Naive thymus-derived CD4-positive, alpha-beta T cell (primary cell): ENCODE measurements at regions of chr6 and their contacts with region 1.

Region 1: DNA sequence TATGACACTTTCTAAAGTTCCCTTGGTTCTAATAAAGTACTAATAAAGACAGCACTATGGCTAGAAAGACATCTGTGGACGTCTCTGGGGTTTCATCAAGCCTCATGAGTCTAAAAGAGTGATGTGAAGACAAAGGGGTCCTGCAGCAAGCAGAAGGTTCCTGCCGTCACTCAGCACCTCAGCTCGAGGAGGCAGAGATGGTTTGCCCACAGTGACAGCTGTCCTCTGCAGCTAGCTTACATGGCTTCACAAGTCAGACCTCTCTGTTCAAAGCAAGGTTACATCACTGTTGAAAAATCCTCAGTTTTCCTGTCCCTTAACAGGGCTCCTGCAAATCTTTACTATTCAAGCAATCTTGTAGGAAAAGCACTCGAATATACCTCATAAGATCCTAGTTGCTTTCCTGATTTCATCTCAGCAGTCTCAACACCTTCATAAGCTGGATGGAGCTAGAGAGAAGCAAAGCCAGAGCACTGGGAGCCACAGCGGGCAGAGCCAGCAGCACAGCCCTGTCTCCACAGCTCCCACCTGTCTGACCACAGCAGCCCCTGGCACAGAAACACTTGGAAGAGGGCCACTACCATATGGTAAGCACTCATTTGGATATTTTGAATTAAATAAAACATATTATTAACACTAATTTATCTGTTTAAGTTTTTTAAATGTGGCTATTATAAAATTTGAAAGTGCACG is 202.3 kb downstream of the GMDS start:
- DNase-seq: no peak
- ATAC-seq: no peak
- H3K4me3 ChIP-seq: no peak overlapping the region
- H3K4me3 Mint-ChIP-seq: no peak overlapping the region
- H3K27ac ChIP-seq: no peak overlapping the region
- H3K27ac Mint-ChIP-seq: peak overlapping the region in 1 of 9 donors; percentile 6
- H3K4me1 ChIP-seq: peaks cover 9 to 10% of the 10 kb centered on the region in 2 donors
- H3K4me1 Mint-ChIP-seq: peaks cover 13 to 28% (median 18%) of the 10 kb centered on the region in 7 donors
- H3K27me3 ChIP-seq: no peaks in the 10 kb centered on the region
- H3K27me3 Mint-ChIP-seq: no peaks in the 10 kb centered on the region

Region 2: GRCh38 chr6:1940381-1940780 is 102.7 kb before region 1 on chr6:
- CTCF ChIA-PET with region 1: no interaction called
- POLR2A ChIA-PET with region 1: no interaction called
- intact Hi-C with region 1: no loop called
- DNase-seq: no peak
- ATAC-seq: no peak
- H3K4me3 ChIP-seq: no peak overlapping the region
- H3K4me3 Mint-ChIP-seq: no peak overlapping the region
- H3K27ac ChIP-seq: no peak overlapping the region
- H3K27ac Mint-ChIP-seq: no peak overlapping the region
- H3K4me1 ChIP-seq: no peaks in the 10 kb centered on the region
- H3K4me1 Mint-ChIP-seq: no peaks in the 10 kb centered on the region
- H3K27me3 ChIP-seq: no peaks in the 10 kb centered on the region
- H3K27me3 Mint-ChIP-seq: no peaks in the 10 kb centered on the region

Region 3: DNA sequence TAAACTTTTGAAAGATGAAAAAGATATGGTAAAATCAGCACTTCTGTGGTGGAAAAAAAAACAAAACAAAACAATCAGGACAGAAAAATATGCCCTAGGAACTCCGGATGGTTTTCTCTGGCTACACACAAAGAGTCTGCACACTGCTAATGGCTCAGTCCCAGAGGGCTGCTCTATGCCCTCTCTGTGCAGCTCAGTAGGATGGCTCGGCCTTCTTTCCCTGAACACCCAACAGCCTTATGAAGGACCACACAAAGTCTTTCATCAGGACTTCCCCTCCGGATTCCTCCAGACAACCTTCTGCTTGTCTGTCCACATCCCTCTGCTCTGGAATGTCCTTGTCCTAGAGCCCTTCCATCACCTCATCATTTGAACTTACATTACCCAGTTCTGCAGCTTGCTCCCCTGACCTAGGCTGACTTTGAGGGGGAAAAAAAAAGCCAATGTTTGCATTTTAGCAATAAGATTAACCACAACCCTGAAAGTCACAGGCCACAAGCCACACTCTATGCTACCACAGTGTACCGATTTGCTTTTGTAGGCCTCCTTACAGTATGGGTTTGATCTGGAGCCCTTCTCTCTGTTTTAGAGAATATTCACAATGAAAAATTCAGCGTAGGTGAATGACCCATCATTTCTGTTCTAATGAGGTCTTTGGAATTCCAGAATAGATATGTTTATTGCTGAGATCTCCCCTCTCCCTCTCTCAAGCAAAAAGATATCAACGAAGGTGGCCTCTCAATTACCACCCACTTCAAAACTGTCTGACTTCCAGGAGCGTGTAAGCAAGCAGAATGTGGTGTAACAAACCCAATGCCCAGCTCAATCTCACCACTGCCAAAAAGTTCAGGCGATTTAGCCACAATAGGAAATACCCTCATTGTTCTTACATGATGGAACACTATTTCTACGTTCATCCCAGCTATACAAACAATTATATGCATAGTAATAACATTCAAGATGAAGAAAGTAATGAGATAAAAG is 38.3 kb after region 1 on chr6:
- CTCF ChIA-PET with region 1: no interaction called
- POLR2A ChIA-PET with region 1: no interaction called
- intact Hi-C with region 1: loop called in 1 of 2 experiments (anchors 5 kb)
- DNase-seq: peak in 1 of 9 donors; percentile 33
- ATAC-seq: peak; percentile 29
- H3K4me3 ChIP-seq: no peak overlapping the region
- H3K4me3 Mint-ChIP-seq: peak overlapping the region in 3 of 10 donors; percentile 18 to 69 (median 39)
- H3K27ac ChIP-seq: no peak overlapping the region
- H3K27ac Mint-ChIP-seq: peak overlapping the region in 1 of 9 donors; percentile 10
- H3K4me1 ChIP-seq: no peaks in the 10 kb centered on the region
- H3K4me1 Mint-ChIP-seq: peaks cover 10 to 26% (median 23%) of the 10 kb centered on the region in 7 donors
- H3K27me3 ChIP-seq: no peaks in the 10 kb centered on the region
- H3K27me3 Mint-ChIP-seq: peaks cover 0 to 3% (median 0%) of the 10 kb centered on the region in 5 donors